ENCODE measurements at regions of chr11 and their contacts with region 1.

Region 1: DNA sequence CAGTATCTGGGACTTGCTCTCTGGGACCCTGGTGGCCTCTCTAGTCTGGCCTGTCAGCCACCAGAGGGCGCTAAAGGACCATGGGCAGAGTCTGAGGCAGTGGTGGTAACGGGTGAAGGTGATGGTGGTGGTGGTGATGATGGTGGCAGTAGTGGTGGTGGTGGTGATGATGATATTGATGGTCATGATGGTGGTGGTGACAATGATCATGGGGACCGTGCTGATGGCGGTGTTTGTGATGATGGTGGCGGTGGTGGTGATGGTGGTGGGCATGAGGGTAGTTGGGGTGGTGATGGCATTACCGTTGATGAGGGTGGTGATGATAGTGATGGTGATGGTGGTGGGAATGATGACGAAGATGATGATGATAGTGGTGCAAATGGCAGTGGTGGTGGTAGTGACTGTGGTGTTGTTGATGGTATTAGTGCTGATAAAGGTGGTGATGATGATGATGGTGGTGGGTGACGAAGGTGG is 16.0 kb downstream of the TRPM5 start:
- DNase-seq: peak; percentile 76
- ATAC-seq: peak; percentile 77 to 90

Region 2: DNA sequence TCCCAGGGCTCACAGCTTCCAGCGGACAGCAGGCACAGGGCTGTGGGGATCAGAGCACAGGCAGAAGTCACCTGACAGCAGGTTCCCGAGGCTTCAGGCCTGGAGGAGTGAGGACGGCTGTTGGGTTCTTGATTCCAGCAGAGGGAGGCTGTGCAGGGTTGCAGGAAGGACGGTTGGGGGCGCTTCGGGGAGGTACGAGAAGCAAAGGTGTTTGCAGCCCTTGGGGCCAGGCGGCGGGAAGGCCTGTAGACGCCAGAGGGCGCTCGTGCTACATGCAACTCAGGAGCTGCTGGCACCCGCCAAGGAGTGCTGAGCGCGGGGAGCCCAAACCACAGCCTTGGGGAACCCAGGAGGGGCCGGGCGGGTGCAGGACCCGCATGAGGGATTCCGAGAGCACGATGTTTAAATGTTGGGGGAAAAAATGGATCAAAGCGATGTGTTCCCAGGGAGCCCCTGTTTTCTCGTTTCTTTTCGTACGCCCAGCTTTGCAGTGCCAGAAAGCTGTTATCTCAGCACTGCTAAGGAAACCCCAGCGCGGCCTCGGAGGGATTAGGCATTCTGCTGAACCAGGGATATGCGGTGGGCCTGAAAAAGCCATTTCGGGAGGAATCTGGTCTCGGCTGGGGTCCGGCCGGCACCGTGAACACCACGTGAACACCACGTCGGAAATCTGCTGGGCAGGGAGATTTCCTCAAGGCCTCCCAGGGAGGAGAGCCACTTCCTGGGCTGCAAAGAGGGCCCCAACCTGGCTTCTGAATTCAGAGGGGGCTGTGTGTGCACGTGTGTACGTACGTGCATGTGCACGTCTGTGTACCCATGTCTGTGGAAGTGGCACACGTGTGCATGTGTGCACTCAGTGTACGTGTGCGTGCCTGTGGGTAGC is 104.6 kb after region 1 on chr11:
- intact Hi-C with region 1: loop called (anchors 1 kb)
- DNase-seq: peak; percentile 92
- ATAC-seq: peak; percentile 88 to 89

Region 3: GRCh38 chr11:2549876-2550620 is 121.7 kb after region 1 on chr11:
- intact Hi-C with region 1: no loop called
- DNase-seq: peak; percentile 23
- ATAC-seq: peak; percentile 61 to 79

Measured in left cardiac atrium (tissue), 4 donors.